Heart left ventricle (tissue), 16 donors: ENCODE measurements at regions of chr1 and their contacts with region 1.

Region 1: DNA sequence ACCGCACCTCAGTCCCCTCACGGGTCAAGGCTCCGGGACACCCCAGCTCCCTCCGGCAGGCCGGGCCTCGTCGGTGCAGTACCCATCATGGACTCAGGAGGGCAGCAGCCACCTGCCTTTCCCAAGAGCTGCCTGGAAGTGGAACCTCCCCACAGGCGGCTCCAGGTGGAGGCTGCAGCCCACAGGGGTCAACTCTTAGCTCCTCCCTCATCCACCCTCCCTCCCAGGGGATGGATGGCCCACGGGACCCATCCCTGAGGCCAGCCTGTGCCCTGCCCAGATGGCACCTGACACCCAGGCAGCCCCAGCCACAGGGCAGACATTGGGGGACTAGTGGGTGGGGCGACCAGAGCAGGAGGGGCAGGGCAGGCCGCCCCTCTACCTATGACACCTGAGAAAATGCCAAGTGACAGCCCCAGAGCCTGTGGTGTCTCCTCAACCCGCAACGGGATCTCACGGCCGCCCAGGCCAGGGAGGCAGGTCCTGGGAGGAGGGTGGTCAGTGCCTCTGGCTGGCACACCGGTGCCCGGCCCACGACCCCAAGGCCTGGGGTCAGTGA is 1.2 kb upstream of the ARHGEF16 start:
- DNase-seq: peak; percentile 65 to 88 (median 71)
- ATAC-seq: peak; percentile 56 to 85 (median 76)
- H3K4me3 ChIP-seq: no peak overlapping the region
- H3K27ac ChIP-seq: no peak overlapping the region
- H3K4me1 ChIP-seq: peaks cover 0 to 36% (median 12%) of the 10 kb centered on the region in 12 donors
- H3K27me3 ChIP-seq: peaks cover 0 to 25% (median 4%) of the 10 kb centered on the region in 9 donors
- CTCF ChIP-seq: peak; percentile 86 to 98 (median 95)
- POLR2A ChIP-seq: no peak

Region 2: GRCh38 chr1:3471302-3472087 is 18.2 kb after region 1 on chr1:
- intact Hi-C with region 1: loop called in 2 of 10 experiments (anchors 1 to 2 kb)
- DNase-seq: peak; percentile 57 to 83 (median 59)
- ATAC-seq: peak; percentile 42 to 79 (median 68)
- H3K4me3 ChIP-seq: no peak overlapping the region
- H3K27ac ChIP-seq: no peak overlapping the region
- H3K4me1 ChIP-seq: peaks cover 0 to 12% (median 8%) of the 10 kb centered on the region in 12 donors
- H3K27me3 ChIP-seq: no peaks in the 10 kb centered on the region
- CTCF ChIP-seq: peak; percentile 23 to 66 (median 52)
- POLR2A ChIP-seq: no peak

Region 3: DNA sequence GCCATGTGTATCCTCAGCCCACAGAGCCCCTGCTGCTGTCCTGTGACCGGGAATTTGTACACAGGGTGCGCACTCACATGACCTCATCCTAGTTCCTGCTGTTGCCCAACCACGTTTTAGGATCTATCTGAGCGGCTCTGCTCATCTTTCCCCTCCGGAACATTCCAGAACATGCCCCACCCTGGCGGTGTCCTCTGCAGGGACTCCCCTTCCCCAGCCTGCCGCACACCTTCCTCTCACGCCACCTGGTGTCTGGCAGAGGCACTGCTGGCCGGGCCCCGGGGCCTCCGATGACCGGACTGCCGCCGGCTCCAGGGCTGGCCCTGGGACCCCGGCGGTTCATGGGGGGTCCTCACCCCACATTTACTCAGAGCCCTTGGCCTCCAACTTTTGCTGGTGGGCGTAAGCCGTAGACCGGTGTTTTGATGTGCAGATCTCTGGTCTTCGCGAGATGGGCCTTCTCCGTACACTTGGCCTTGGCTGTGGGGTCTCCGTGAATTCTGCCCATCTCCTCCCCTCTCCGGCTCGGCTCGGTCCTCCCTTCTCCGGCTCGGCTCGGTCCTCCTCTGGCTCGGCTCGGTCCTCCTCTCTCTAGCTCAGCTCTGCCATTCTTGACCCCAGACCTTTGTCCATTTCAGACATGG is 30.6 kb after region 1 on chr1:
- intact Hi-C with region 1: loop called (anchors 1 to 5 kb)
- DNase-seq: no peak
- ATAC-seq: peak in 3 of 4 donors; percentile 53 to 67 (median 56)
- H3K4me3 ChIP-seq: no peak overlapping the region
- H3K27ac ChIP-seq: no peak overlapping the region
- H3K4me1 ChIP-seq: peaks cover 0 to 3% (median 0%) of the 10 kb centered on the region in 12 donors
- H3K27me3 ChIP-seq: peaks cover 0 to 4% (median 0%) of the 10 kb centered on the region in 9 donors
- CTCF ChIP-seq: peak; percentile 74 to 92 (median 84)
- POLR2A ChIP-seq: no peak

Region 4: DNA sequence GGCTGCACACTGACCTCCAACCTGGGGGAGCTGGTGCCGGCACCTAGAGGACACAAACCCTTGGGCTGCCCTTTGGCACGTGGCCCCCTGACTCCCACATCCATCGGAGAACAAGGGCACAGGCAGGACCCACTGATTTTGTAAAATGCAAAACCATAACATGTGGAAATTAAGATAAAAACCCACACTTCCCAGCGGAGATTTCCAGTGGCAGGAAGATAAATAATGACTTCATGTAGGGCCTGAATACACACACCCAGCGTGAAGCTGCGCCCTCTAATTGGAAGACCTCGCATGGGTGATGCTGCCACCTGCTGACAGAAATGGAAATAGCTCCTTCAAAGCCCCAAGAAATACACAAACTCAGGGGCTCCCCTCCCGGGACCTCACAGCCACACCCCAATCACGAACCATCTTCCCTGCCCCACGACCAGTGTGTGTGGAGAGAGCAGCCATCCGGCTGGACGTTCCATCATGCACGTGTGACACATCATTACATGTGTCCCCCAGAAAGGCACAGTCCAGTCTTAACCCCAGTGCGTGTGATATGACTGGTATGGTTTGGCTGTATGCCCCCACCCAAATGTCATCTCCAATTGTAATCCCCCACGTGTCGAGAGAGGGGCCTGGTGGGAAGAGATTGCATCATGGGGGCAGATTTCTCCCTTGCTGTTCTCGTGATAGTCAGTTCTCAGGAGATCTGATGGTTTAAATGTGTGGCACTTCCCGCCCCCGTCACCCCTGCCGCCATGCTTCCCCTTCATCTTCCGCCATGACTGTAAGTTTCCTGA is 165.8 kb after region 1 on chr1:
- intact Hi-C with region 1: loop called in 6 of 10 experiments (anchors 1 to 5 kb)
- DNase-seq: peak in 4 of 5 donors; percentile 65 to 74 (median 67)
- ATAC-seq: peak in 3 of 4 donors; percentile 75 to 81 (median 75)
- H3K4me3 ChIP-seq: no peak overlapping the region
- H3K27ac ChIP-seq: no peak overlapping the region
- H3K4me1 ChIP-seq: peaks cover 0 to 30% (median 20%) of the 10 kb centered on the region in 12 donors
- H3K27me3 ChIP-seq: peaks cover 0 to 3% (median 0%) of the 10 kb centered on the region in 9 donors
- CTCF ChIP-seq: peak; percentile 78 to 91 (median 84)
- POLR2A ChIP-seq: no peak

Region 5: DNA sequence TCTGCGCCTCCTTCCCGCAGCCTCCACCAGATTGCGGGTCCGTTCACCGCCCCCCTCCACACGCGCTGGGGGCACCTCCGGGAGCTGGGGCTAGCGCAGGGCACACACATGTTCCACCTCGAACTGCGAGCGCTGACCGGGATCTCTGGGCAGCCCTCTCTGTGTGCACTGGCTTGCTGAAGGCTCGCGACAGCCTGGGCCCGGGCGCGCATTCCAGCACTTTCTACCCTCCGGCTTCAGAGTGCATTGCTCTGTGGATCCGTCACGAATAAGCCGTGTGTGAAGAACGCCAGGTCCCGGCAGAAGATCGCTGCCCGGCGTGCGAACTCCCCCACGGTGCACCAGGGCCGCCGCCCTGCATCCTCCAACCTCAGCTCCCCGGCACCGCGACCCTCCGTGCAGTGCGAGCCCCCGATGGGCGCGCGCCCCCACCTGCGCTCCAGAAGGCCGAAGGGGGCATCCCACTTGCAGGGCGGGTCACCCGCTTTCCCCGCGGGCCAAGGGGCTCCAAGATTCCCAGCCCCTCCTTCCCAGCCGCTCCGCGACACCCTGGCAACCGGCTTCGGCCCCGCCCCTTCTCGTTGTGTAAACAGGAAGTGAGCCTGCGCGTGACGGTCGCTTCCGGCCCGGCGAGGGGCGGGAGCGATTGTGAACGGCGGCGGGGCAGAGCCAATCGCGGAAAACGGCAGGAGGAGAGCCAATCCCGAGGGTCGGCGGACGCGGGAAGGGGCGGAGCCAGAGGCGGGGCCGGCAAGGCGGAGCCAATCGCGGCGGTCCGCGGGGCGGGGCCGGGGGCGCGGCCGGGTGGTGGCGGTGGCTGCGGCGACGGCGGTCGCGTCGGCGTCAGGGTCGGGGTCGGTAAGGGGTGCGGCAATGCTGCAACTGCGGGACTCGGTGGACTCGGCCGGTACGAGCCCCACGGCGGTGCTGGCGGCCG is 171.2 kb after region 1 on chr1 and contains the start of gene TPRG1L:
- intact Hi-C with region 1: loop called in 5 of 10 experiments (anchors 5 kb)
- DNase-seq: peak; percentile 98 to 100 (median 99)
- ATAC-seq: peak; percentile 97 to 99 (median 98)
- H3K4me3 ChIP-seq: peak within 1 kb of the TSS; percentile 71 to 99 (median 96)
- H3K27ac ChIP-seq: peak within 1 kb of the TSS; percentile 56 to 88 (median 80)
- H3K4me1 ChIP-seq: peaks cover 0 to 34% (median 24%) of the 10 kb centered on the region in 12 donors
- H3K27me3 ChIP-seq: no peaks in the 10 kb centered on the region
- CTCF ChIP-seq: no peak
- POLR2A ChIP-seq: peak in 1 of 2 donors; percentile 59
- total RNA-seq, gene TPRG1L: 32.0 to 58.0 (median 48.8) TPM